Right cardiac atrium (tissue), 5 donors: ENCODE measurements at regions of chr11 and their contacts with region 1.

Region 1: DNA sequence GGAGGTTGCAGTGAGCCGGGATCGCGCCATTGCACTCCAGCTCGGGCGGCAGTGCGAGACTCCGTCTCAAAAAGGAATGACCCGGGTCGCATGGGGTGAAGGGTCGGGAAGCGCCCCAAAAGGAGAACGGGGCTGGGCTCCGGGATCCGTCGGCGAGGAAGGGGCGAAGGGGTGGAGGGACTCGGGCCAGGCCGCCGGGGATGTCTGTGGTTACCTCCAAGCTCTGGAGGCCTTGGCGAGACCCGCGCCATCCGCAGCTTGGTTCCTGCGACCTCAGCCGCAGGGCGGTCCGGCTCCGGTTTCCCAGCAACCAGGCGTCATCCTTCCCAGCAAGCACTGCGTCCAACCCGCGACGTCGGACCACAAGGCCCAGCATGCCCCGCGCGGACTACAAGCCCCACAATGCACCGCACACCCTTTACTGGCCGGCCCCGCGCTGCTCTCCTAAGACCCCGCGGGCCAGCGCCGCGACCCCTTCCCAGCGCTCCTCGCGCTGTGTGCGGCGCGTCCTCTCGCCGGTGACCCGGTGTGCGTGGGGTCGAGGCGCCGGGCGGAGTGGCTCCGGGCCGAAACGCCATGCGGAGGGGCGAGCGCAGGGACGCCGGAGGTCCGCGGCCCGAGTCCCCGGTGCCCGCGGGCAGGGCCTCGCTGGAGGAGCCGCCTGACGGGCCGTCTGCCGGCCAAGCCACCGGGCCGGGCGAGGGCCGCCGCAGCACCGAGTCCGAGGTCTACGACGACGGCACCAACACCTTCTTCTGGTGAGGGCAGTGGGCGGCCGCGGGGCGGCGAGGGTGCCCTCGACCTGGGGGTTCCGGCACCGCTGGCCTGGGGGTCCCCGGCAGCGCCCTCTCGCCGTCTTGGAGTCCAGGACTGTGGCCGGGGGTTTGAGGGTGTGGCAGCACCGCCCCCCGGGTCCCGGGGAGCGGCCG is at the start of gene PTDSS2:
- DNase-seq: peak; percentile 97 to 99 (median 98)
- ATAC-seq: peak; percentile 92 to 93
- H3K4me3 ChIP-seq: peak within 1 kb of the TSS; percentile 72
- H3K27ac ChIP-seq: peak within 1 kb of the TSS; percentile 80
- H3K4me1 ChIP-seq: no peaks in the 10 kb centered on the region
- H3K27me3 ChIP-seq: no peaks in the 10 kb centered on the region
- total RNA-seq, gene PTDSS2: 30.2 to 33.3 (median 30.9) TPM

Region 2: DNA sequence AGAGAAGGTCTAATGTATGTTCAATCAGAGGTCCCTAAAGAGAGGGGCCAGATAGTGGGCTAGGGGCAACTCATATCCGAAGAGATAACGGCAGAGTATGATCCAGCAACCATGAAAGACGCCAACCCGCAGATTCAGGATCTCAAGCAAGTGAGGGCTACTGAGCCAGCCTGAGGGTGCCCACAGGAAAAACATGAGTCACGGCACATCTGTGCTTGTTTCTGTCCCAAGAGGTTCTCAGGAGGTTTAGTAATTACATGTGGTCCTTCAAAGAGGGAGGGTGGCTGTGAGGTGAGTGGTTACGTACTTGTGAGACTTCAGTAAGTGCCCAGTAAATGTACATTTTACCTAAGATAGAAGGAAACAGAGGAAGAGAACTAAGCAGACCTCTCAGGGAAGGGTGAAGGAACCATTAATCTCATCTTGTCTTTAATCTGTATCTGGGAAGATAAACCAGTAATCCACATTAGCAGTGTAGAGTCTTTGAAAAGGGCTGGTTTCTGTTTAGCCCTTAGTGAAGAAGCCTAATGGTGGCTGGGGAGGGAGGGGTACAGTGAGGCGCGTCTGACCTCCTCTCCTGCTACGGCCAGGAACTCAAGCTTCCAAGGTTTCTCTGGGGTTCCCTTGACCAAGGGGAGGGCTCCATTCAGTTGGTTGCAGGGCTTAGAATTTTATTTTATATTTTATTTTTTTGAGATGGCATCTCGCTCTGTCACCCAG is 224.2 kb before region 1 on chr11:
- intact Hi-C with region 1: no loop called
- DNase-seq: no peak
- ATAC-seq: no peak
- H3K4me3 ChIP-seq: no peak overlapping the region
- H3K27ac ChIP-seq: no peak overlapping the region
- H3K4me1 ChIP-seq: no peaks in the 10 kb centered on the region
- H3K27me3 ChIP-seq: no peaks in the 10 kb centered on the region

Region 3: DNA sequence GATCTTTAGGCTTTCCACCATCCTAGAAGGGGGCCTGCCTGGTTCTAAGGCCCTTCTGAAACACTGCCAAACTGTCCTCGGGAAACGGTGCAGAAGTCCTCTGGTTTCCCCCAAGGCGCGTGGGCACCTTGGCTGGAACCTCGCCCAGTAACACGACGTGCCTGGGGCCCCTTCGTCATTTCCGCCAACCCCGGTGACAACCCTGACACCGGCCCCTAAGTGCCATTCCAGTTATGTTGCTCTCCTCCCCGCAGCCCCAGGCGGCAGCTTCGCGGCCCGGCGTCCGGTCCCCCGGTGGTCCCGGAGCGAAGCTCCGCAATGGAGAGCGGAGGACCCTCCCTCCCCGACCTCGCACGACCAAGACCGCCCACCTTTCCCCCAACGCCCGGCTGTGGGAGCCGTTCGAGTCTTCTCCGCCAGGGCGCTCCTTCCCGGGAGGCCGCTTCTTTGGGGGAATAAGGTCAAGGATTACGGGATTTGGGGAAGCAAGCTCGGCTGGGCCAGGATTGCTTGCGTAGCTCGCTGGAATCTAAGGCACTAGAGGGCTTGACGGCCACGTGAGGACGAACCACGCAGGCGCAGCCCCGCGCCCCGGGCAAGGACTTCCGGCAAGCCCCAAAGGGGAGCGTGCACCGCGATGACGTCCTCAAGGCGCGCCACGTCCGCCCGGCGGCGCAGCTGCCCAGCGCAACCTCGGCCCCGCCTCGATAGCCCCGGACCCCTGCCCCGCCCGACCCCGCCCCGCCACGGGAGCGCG is 56.3 kb after region 1 on chr11:
- intact Hi-C with region 1: loop called in 2 of 4 experiments (anchors 2 to 5 kb)
- DNase-seq: peak; percentile 99 to 100 (median 99)
- ATAC-seq: peak; percentile 87 to 90
- H3K4me3 ChIP-seq: peak overlapping the region; percentile 72
- H3K27ac ChIP-seq: peak overlapping the region; percentile 99
- H3K4me1 ChIP-seq: peaks cover 4% of the 10 kb centered on the region
- H3K27me3 ChIP-seq: no peaks in the 10 kb centered on the region